Aorta (tissue), 5 donors: ENCODE measurements at regions of chr7 and their contacts with region 1.

Region 1: GRCh38 chr7:94436018-94436604 is 41.4 kb downstream of the COL1A2 start:
- DNase-seq: peak in 1 of 2 donors; percentile 68
- ATAC-seq: peak; percentile 84
- H3K4me3 ChIP-seq: no peak overlapping the region
- H3K27ac ChIP-seq: no peak overlapping the region
- H3K4me1 ChIP-seq: no peaks in the 10 kb centered on the region
- H3K27me3 ChIP-seq: no peaks in the 10 kb centered on the region

Region 2: GRCh38 chr7:94289071-94289470 is 147.0 kb before region 1 on chr7:
- intact Hi-C with region 1: loop called (anchors 1 to 2 kb)
- DNase-seq: peak; percentile 72 to 76
- ATAC-seq: peak; percentile 83
- H3K4me3 ChIP-seq: no peak overlapping the region
- H3K27ac ChIP-seq: no peak overlapping the region
- H3K4me1 ChIP-seq: no peaks in the 10 kb centered on the region
- H3K27me3 ChIP-seq: no peaks in the 10 kb centered on the region